Activated CD4-positive, alpha-beta T cell treated with anti-CD3 and anti-CD28 coated beads, Interleukin-2, amount 10 ng/mL, durations not matched to agents 24 days and 14 days (primary cell): ENCODE measurements at regions of chr18 and their contacts with region 1.

Region 1: GRCh38 chr18:26548429-26549262 is at the start of gene KCTD1:
- DNase-seq: peak; percentile 92
- H3K4me3 Mint-ChIP-seq: peak within 1 kb of the TSS; percentile 91
- H3K27ac Mint-ChIP-seq: peak within 1 kb of the TSS; percentile 83
- H3K4me1 Mint-ChIP-seq: peaks cover 10% of the 10 kb centered on the region
- H3K27me3 Mint-ChIP-seq: peaks cover 38% of the 10 kb centered on the region
- total RNA-seq, gene KCTD1: 4.7 and 5.0 TPM in 2 replicates

Region 2: DNA sequence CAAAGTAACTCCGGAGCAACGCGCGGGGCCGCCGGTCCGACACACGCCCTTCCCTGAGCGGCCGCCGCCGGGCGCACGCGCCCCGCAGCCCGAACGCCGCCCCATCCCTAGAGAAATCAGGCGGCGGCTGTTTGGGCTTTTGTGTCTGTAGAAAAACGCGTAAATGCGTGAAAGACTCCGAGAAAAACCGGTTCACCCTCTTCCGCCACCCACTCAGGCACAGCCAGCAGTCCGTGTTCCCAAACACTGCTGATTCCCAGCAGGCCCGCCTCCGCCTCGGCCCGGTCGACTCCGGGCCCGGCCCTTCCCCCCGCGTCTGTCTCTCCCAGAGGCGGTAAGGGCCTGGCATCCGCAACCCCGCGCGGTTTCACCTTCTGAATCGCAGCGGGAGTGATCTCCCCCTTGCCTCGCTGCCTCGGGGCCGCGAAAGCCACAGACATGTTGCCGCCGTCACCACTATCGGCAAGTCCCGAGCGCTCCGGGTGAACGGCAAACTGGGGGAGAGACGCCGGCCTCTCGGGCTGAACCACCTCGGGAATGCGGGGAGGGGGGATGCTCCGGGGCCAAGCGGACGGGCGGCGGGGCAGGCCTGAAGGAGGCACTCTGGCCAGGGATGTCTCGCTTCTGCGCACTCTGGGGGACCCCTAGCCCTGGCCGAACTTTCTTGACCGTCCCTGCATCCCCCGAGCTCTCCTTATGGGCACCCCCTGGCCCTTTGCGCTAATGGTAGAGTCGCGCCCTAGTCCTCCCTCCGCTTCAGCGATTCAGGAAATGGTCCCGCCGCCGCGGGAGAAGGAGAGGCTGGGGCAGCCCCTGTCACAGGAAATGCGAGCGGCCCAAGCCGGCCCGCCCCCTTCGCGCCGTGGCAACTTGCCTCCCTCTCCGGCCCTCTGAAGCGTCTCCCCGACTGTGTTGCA is 458.3 kb before region 1 on chr18 and contains the start of gene SS18:
- intact Hi-C with region 1: loop called (anchors 10 kb)
- DNase-seq: peak; percentile 97
- H3K4me3 Mint-ChIP-seq: peak within 1 kb of the TSS; percentile 97
- H3K27ac Mint-ChIP-seq: peak within 1 kb of the TSS; percentile 97
- H3K4me1 Mint-ChIP-seq: peaks cover 19% of the 10 kb centered on the region
- H3K27me3 Mint-ChIP-seq: no peaks in the 10 kb centered on the region
- total RNA-seq, gene SS18: 66.2 and 70.8 TPM in 2 replicates

Region 3: DNA sequence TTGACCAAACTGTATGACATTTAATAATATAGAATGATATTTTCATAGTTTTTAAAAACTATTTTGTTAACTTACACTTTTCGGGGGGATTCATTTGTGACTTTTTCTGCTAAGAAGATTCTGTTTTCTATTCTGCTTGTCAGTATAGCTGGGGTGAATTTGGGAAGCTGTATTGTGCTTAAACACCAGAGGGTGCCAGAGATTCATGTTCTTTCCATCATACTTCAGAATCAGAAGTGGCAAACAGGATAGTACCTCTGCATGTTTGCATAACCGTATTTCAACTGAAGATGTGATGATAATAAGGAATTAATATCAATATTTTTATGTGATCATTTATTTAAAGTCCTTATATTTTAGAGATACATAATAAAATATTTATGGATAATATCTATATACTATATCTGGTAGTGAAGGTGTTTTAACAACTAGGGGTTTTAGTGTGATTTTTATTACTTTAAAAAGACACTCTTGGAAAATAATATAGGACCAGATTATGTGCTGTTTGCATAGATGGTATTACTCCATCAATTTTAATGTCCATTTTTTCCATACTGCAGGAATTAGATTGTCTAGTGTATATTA is 241.4 kb before region 1 on chr18:
- intact Hi-C with region 1: loop called (anchors 10 kb)
- DNase-seq: peak; percentile 73
- H3K4me3 Mint-ChIP-seq: no peak overlapping the region
- H3K27ac Mint-ChIP-seq: no peak overlapping the region
- H3K4me1 Mint-ChIP-seq: no peaks in the 10 kb centered on the region
- H3K27me3 Mint-ChIP-seq: no peaks in the 10 kb centered on the region

Region 4: GRCh38 chr18:26458526-26459232 is 90.0 kb before region 1 on chr18:
- intact Hi-C with region 1: loop called (anchors 5 kb)
- DNase-seq: no peak
- H3K4me3 Mint-ChIP-seq: no peak overlapping the region
- H3K27ac Mint-ChIP-seq: peak overlapping the region; percentile 54
- H3K4me1 Mint-ChIP-seq: peaks cover 15% of the 10 kb centered on the region
- H3K27me3 Mint-ChIP-seq: no peaks in the 10 kb centered on the region

Region 5: DNA sequence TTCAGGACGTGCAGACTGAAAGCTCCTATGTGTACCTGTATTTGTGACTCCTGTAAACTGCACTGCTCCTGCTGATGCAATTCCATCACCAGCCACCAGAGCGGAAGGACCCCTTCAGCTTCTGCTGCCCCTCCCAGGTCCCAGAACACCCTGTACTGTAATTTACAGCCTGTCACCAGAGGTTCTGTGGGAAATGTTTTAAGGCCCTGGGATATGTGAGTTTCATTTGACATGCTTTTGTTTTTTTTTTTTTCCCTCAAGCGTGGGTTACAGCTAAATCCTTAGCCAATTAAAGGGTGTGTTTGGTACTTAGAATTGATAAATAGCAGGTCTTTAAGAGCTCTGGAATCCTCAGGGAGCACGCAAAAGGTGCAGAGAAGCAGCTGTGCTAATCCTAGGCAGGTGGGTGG is 79.7 kb before region 1 on chr18:
- intact Hi-C with region 1: no loop called
- DNase-seq: no peak
- H3K4me3 Mint-ChIP-seq: no peak overlapping the region
- H3K27ac Mint-ChIP-seq: no peak overlapping the region
- H3K4me1 Mint-ChIP-seq: no peaks in the 10 kb centered on the region
- H3K27me3 Mint-ChIP-seq: no peaks in the 10 kb centered on the region

Region 6: GRCh38 chr18:26503382-26503781 is 45.3 kb before region 1 on chr18:
- intact Hi-C with region 1: no loop called
- DNase-seq: no peak
- H3K4me3 Mint-ChIP-seq: no peak overlapping the region
- H3K27ac Mint-ChIP-seq: no peak overlapping the region
- H3K4me1 Mint-ChIP-seq: no peaks in the 10 kb centered on the region
- H3K27me3 Mint-ChIP-seq: no peaks in the 10 kb centered on the region